Panc1 (cell line): ENCODE measurements at regions of chr9 and their contacts with region 1.

Region 1: DNA sequence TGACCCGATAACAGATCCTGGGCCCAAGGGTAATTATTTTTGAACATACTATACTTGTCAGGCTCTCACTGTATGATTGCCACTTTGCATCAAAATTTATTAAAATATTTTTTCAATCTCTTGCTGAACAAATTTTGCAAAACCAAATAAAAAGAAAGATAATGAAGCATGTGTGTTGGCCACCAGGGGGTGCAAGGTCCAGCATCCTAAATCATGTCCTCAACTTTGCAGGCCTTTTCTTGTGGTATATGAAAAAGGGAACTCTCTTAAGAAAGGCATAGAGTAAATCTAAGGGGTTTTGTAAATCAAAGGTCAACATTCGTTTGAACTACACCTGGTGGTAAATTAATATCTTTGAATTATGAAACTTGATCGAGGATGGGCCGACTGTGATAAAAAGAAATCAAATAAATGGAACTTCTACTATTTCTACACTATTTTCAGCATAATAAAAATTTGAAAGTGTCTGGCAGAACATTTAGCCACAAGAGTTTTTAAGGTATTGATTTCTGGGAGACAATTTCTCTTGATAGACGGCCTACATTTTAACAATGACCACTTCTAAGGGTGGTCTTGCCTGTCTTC is 676.5 kb downstream of the DMRTA1 start:
- DNase-seq: no peak
- ATAC-seq: no peak
- H3K4me3 ChIP-seq: no peak overlapping the region
- H3K27ac ChIP-seq: no peak overlapping the region
- H3K4me1 ChIP-seq: no peaks in the 10 kb centered on the region
- H3K27me3 ChIP-seq: no peaks in the 10 kb centered on the region
- CTCF ChIP-seq: peak; percentile 44; the same call in 1 of the 2 replicates

Region 2: DNA sequence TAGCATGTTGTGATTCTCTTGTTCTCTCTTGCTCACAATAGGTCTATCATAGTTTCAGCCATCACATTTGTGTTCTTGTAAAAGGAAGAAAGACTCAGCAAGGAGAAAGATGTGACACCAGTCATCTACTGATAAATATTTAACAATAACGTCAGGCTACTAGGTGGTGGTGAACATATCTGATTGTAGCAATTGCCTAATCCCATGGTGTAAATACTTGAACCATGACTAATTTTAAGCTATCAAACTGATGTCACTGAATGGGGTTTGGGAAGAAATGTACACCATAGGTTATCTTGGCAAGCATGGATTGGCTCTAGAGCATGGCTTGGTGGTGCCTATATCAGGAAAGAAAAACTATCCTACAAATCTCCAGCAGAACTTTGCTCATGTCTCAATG is 659.9 kb before region 1 on chr9:
- CTCF ChIA-PET with region 1: no interaction called
- POLR2A ChIA-PET with region 1: no interaction called
- in situ Hi-C with region 1: no loop called
- intact Hi-C with region 1: no loop called
- DNase-seq: no peak
- ATAC-seq: no peak
- H3K4me3 ChIP-seq: no peak overlapping the region
- H3K27ac ChIP-seq: no peak overlapping the region
- H3K4me1 ChIP-seq: no peaks in the 10 kb centered on the region
- H3K27me3 ChIP-seq: no peaks in the 10 kb centered on the region
- CTCF ChIP-seq: no peak

Region 3: DNA sequence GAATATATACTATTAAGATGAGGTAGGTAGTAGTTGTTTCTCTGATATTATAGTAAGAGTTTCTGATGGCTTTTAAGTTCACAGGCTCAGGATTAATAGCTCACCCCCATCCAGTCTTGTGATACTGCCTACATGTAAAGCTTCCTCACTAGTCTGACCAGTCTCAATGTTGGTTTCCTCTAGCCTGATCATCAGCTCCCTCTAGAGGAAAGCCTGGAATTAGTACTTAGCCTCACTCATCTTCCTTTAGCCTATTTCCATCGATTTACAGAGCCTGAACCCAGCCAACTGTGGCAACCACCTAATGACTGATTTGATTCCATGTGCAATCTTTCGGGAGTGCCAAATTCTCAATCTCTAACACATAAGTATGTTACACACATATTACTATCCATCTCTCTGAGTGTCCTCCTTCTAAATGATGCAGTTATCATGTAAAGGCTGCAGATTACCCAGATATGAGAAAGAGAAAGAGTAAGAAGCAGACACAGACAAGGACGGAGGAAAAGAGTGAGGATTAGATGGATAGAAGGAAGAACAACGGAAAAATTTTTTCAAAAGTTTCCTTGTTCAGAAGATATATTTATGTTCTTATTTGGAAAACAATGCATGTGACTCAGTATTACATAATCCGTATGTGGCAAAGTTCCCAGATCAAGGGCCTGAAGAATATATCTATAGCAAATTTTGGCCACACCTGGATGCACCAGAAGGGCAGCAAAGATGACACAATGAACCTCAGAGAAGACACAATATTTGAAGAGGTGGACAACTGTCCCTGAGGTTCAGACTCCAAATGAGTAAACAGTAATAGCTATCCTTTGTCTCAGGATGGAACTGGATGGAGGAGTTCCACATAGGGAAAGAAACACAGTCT is 369.2 kb after region 1 on chr9:
- CTCF ChIA-PET with region 1: no interaction called
- POLR2A ChIA-PET with region 1: no interaction called
- in situ Hi-C with region 1: no loop called
- intact Hi-C with region 1: loop called (anchors 5 kb)
- DNase-seq: peak; percentile 18
- ATAC-seq: peak; percentile 72; the same call in 1 of the 2 replicates
- H3K4me3 ChIP-seq: no peak overlapping the region
- H3K27ac ChIP-seq: no peak overlapping the region
- H3K4me1 ChIP-seq: no peaks in the 10 kb centered on the region
- H3K27me3 ChIP-seq: no peaks in the 10 kb centered on the region
- CTCF ChIP-seq: peak; percentile 46